ENCODE measurements at regions of chr17 and their contacts with region 1.

Region 1: GRCh38 chr17:41521574-41522261 is 3.0 kb upstream of the KRT15 start:
- DNase-seq: peak; percentile 97 to 98
- H3K4me3 ChIP-seq: peak overlapping the region; percentile 93; the same call in 1 of the 2 replicates
- H3K27ac ChIP-seq: peak overlapping the region; percentile 95
- H3K4me1 ChIP-seq: peaks cover 81% of the 10 kb centered on the region
- H3K27me3 ChIP-seq: no peaks in the 10 kb centered on the region
- CTCF ChIP-seq: no peak

Region 2: GRCh38 chr17:40499551-40500174 is 1022.1 kb before region 1 on chr17:
- CTCF ChIA-PET with region 1: no interaction called
- POLR2A ChIA-PET with region 1: interaction called, 16 read pairs
- intact Hi-C with region 1: no loop called
- DNase-seq: peak; percentile 65 to 83
- H3K4me3 ChIP-seq: peak overlapping the region; percentile 80
- H3K27ac ChIP-seq: no peak overlapping the region
- H3K4me1 ChIP-seq: peaks cover 47% of the 10 kb centered on the region
- H3K27me3 ChIP-seq: no peaks in the 10 kb centered on the region
- CTCF ChIP-seq: peak; percentile 24; the same call in 1 of the 2 replicates

Region 3: GRCh38 chr17:41379380-41379779 is 142.3 kb before region 1 on chr17:
- CTCF ChIA-PET with region 1: no interaction called
- POLR2A ChIA-PET with region 1: interaction called, 16 read pairs
- intact Hi-C with region 1: no loop called
- DNase-seq: no peak
- H3K4me3 ChIP-seq: no peak overlapping the region
- H3K27ac ChIP-seq: peak overlapping the region; percentile 90
- H3K4me1 ChIP-seq: peaks cover 26% of the 10 kb centered on the region
- H3K27me3 ChIP-seq: no peaks in the 10 kb centered on the region
- CTCF ChIP-seq: no peak

Region 4: GRCh38 chr17:41392278-41392677 is 129.4 kb before region 1 on chr17:
- CTCF ChIA-PET with region 1: no interaction called
- POLR2A ChIA-PET with region 1: no interaction called
- intact Hi-C with region 1: no loop called
- DNase-seq: no peak
- H3K4me3 ChIP-seq: no peak overlapping the region
- H3K27ac ChIP-seq: 0 out of 2 replicates have a peak overlapping the region, but pooled peaks have one; percentile 25
- H3K4me1 ChIP-seq: peaks cover 21% of the 10 kb centered on the region
- H3K27me3 ChIP-seq: no peaks in the 10 kb centered on the region
- CTCF ChIP-seq: no peak

Region 5: DNA sequence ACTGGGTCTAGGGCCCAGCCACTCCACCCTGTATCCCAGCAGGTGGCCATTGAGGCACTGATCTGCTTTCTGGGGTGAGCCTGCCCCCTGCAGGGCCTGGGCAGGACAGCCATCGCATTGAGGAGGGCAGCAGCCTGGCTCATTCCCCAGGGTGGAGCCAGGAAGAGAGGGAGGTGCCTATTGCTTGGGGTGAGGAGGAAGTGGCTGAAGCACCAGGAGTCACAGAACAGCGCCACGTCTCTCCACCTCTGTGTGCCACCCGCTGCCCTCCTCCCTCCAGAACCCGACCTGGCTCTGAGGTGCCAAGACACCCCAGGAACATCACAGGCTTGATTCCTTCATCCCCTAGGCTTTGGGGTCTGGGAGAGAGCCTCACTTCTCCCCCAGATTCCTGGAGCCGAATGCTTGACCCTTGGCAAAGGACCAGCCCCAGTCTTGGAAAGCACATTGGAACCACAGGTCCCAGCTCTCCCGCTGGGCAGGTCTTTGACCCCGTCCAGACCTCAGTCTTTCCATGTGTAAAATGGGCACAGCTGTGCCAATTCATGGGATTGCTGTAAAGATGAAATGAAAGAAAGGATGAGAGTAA is 24.8 kb before region 1 on chr17:
- CTCF ChIA-PET with region 1: interaction called, 15 read pairs
- POLR2A ChIA-PET with region 1: interaction called, 4 read pairs
- intact Hi-C with region 1: no loop called
- DNase-seq: peak; percentile 82 to 87
- H3K4me3 ChIP-seq: no peak overlapping the region
- H3K27ac ChIP-seq: no peak overlapping the region; the same call in 1 of the 2 replicates
- H3K4me1 ChIP-seq: peaks cover 83% of the 10 kb centered on the region
- H3K27me3 ChIP-seq: no peaks in the 10 kb centered on the region
- CTCF ChIP-seq: peak; percentile 86

Region 6: DNA sequence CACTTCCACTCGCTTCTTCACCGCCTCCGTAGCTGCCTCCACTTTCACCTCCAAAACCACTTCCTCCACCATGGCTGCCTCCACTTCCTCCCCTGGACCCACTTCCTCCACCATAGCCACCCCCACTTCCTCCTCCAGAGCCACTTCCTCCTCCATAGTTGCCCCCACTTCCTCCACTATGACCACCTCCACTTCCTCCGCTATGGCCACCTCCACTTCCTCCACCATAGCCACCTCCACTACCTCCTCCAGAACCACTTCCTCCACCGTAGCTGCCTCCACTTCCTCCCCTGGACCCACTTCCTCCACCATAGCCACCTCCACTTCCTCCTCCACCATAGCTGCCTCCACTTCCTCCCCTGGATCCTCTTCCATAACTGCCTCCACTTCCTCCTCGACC is 45.6 kb after region 1 on chr17:
- CTCF ChIA-PET with region 1: no interaction called
- POLR2A ChIA-PET with region 1: no interaction called
- intact Hi-C with region 1: no loop called
- DNase-seq: no peak
- H3K4me3 ChIP-seq: no peak overlapping the region
- H3K27ac ChIP-seq: no peak overlapping the region
- H3K4me1 ChIP-seq: no peaks in the 10 kb centered on the region
- H3K27me3 ChIP-seq: no peaks in the 10 kb centered on the region
- CTCF ChIP-seq: no peak

Region 7: GRCh38 chr17:41624208-41625101 is 102.7 kb after region 1 on chr17 and contains the start of gene KRT17:
- CTCF ChIA-PET with region 1: no interaction called
- POLR2A ChIA-PET with region 1: interaction called, 20 read pairs
- intact Hi-C with region 1: no loop called
- DNase-seq: peak in 1 of 2 experiments; percentile 76
- H3K4me3 ChIP-seq: no peak within 1 kb of the TSS
- H3K27ac ChIP-seq: no peak within 1 kb of the TSS
- H3K4me1 ChIP-seq: peaks cover 8% of the 10 kb centered on the region
- H3K27me3 ChIP-seq: no peaks in the 10 kb centered on the region
- CTCF ChIP-seq: no peak
- total RNA-seq, gene KRT17: 29.0 and 80.8 TPM in 2 replicates

Measured in PC-9 (cell line).